Left ventricle myocardium superior (tissue), 1 donor: ENCODE measurements at regions of chr15 and their contacts with region 1.

Region 1: DNA sequence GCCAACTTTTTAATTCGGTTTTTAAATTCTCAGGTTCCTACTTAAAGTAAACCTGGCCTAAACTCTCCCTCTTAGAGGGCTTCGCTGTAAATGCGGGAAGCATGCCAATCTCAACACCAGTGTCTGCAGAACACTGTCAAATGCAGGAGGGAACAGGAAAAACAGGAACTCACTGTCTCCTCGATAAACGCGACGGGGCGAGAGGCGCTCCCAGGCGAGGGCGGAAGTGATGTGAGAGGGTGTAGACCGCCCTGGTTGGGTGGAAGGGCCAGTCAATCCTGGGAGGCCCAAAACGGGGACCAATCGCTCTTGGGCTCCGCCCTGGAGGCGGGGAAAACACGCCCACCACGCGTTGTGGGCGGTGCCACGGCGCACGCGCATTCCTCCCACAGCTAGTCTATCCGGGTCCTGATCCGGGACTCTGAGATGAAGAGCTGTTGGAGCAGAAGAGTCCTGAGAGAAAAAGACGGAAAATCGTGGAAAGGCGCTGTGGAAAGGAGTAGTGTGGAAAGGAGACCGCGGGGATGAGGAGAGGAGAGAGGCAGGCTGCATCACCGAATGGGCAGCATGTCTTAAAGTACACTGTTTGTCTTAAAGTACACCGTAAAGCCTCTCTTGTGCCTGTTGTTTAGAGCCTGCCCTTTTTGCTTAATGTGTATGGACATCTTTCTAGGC is 27.1 kb downstream of the SLC28A2 start:
- DNase-seq: peak; percentile 98
- ATAC-seq: peak; percentile 100

Region 2: GRCh38 chr15:45200001-45200798 is 79.0 kb before region 1 on chr15:
- intact Hi-C with region 1: loop called (anchors 1 kb)
- DNase-seq: peak; percentile 92
- ATAC-seq: peak; percentile 80